CD4-positive, alpha-beta memory T cell (primary cell): ENCODE measurements at regions of chr3 and their contacts with region 1.

Region 1: DNA sequence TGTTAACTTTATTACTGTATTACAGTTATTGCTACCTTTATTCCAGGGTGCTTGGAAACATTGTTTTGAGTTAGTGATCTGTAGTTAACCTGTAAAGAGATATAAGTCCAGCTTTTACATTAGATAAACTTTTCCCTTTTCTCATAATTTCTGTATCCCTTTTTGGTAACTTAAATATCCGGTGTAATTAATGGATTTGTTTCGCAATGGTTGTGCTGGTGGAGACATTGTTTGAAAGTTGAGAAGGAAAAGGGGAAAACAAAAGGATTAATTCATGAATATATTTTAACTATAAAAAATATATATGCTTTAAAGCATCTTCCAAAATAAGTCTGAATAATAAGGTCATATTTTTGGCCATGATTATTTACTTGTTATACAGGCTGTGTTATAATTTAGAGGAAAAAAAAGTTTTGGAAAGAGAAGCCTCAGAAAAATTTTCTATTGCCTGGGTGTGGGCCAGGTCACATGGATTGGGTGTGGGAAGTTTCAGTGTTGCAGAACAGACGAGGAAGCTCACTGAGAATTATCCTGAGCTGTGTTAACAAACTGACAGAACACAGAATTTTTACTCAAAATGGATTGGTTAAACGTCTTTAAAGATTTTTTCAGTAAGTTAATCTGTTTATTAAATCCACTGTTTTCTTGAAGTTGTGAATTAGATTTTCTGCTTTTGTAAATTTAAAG is 27.7 kb upstream of the IL20RB start:
- DNase-seq: no peak
- H3K4me3 ChIP-seq: no peak overlapping the region
- H3K4me3 Mint-ChIP-seq: peak overlapping the region in 1 of 8 donors; percentile 9
- H3K27ac ChIP-seq: no peak overlapping the region
- H3K27ac Mint-ChIP-seq: peak overlapping the region in 1 of 7 donors; percentile 48
- H3K4me1 ChIP-seq: peaks cover 52% of the 10 kb centered on the region
- H3K4me1 Mint-ChIP-seq: peaks cover 35 to 76% (median 61%) of the 10 kb centered on the region in 4 donors
- H3K27me3 ChIP-seq: no peaks in the 10 kb centered on the region
- H3K27me3 Mint-ChIP-seq: no peaks in the 10 kb centered on the region

Region 2: GRCh38 chr3:136621628-136622027 is 308.5 kb before region 1 on chr3:
- CTCF ChIA-PET with region 1: no interaction called
- POLR2A ChIA-PET with region 1: no interaction called
- intact Hi-C with region 1: no loop called
- DNase-seq: no peak
- H3K4me3 ChIP-seq: no peak overlapping the region
- H3K4me3 Mint-ChIP-seq: no peak overlapping the region
- H3K27ac ChIP-seq: no peak overlapping the region
- H3K27ac Mint-ChIP-seq: peak overlapping the region in 1 of 7 donors; percentile 56
- H3K4me1 ChIP-seq: no peaks in the 10 kb centered on the region
- H3K4me1 Mint-ChIP-seq: peaks cover 18 to 28% (median 20%) of the 10 kb centered on the region in 4 donors
- H3K27me3 ChIP-seq: no peaks in the 10 kb centered on the region
- H3K27me3 Mint-ChIP-seq: no peaks in the 10 kb centered on the region

Region 3: GRCh38 chr3:136899622-136900158 is 30.4 kb before region 1 on chr3:
- CTCF ChIA-PET with region 1: no interaction called
- POLR2A ChIA-PET with region 1: no interaction called
- intact Hi-C with region 1: loop called (anchors 5 kb)
- DNase-seq: no peak
- H3K4me3 ChIP-seq: no peak overlapping the region
- H3K4me3 Mint-ChIP-seq: peak overlapping the region in 7 of 8 donors; percentile 33 to 80 (median 68)
- H3K27ac ChIP-seq: no peak overlapping the region
- H3K27ac Mint-ChIP-seq: peak overlapping the region; percentile 32 to 86 (median 65)
- H3K4me1 ChIP-seq: peaks cover 68% of the 10 kb centered on the region
- H3K4me1 Mint-ChIP-seq: peaks cover 46 to 69% (median 56%) of the 10 kb centered on the region in 4 donors
- H3K27me3 ChIP-seq: no peaks in the 10 kb centered on the region
- H3K27me3 Mint-ChIP-seq: no peaks in the 10 kb centered on the region

Region 4: GRCh38 chr3:137325170-137325569 is 395.0 kb after region 1 on chr3:
- CTCF ChIA-PET with region 1: no interaction called
- POLR2A ChIA-PET with region 1: no interaction called
- intact Hi-C with region 1: no loop called
- DNase-seq: no peak
- H3K4me3 ChIP-seq: no peak overlapping the region
- H3K4me3 Mint-ChIP-seq: no peak overlapping the region
- H3K27ac ChIP-seq: no peak overlapping the region
- H3K27ac Mint-ChIP-seq: no peak overlapping the region
- H3K4me1 ChIP-seq: no peaks in the 10 kb centered on the region
- H3K4me1 Mint-ChIP-seq: no peaks in the 10 kb centered on the region
- H3K27me3 ChIP-seq: no peaks in the 10 kb centered on the region
- H3K27me3 Mint-ChIP-seq: no peaks in the 10 kb centered on the region